HEK293 (cell line): ENCODE measurements at regions of chr7 and their contacts with region 1.

Region 1: GRCh38 chr7:138002096-138002827 is 376 bp upstream of the CREB3L2 start:
- H3K4me3 ChIP-seq: peak overlapping the region; percentile 98
- H3K27ac ChIP-seq: no peak overlapping the region
- H3K4me1 ChIP-seq: no peaks in the 10 kb centered on the region
- CTCF ChIP-seq: peak; percentile 88

Region 2: DNA sequence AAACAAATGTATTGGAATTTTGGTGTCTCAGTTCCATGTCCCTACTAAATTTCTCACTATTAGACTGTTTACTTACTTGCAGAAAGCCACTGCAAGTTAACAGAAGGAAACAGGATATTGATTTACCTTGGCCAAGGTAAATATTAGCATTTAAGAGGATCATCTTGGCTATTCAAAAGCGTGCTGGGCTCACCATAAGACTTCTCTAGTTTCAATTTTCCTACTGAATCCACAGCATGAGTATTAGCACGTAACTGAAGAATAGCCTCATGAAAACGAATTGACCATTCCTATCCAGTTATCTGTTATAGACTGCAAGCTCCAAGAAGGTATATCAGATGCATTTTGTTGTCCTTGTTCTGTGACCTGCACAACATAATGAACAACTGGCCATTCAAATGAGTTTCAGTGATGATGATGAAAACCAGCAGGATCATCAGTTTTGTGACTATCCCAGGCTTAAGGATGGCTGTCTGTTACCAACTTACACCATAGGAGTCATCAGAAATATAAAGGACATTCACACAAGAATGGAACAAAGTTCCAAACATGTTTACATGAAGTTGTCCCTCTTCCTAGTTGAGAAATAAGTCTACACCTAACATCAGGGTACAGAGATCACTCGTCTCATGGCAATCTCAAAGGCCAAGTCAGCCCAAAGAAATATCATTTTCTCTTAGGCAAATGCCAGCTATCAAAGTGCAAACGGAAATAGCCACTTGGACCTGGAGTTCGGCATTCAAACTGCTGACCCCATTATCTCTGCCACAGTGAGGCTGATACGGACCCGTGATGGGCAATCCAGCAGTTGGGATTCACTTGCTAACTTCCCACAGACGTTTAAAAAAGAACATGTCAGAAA is 53.6 kb before region 1 on chr7:
- CTCF ChIA-PET with region 1: interaction called, 11 read pairs
- POLR2A ChIA-PET with region 1: interaction called, 6 read pairs
- H3K4me3 ChIP-seq: no peak overlapping the region
- H3K27ac ChIP-seq: no peak overlapping the region
- H3K4me1 ChIP-seq: 0 out of 2 replicates have a peak, but pooled peaks cover 2% of the 10 kb centered on the region
- CTCF ChIP-seq: no peak

Region 3: GRCh38 chr7:137953665-137954470 is 48.4 kb before region 1 on chr7:
- CTCF ChIA-PET with region 1: interaction called, 11 read pairs
- POLR2A ChIA-PET with region 1: interaction called, 6 read pairs
- H3K4me3 ChIP-seq: no peak overlapping the region
- H3K27ac ChIP-seq: no peak overlapping the region
- H3K4me1 ChIP-seq: 0 out of 2 replicates have a peak, but pooled peaks cover 4% of the 10 kb centered on the region
- CTCF ChIP-seq: no peak

Region 4: GRCh38 chr7:138015096-138015495 is 12.8 kb after region 1 on chr7:
- CTCF ChIA-PET with region 1: interaction called, 10 read pairs
- POLR2A ChIA-PET with region 1: no interaction called
- H3K4me3 ChIP-seq: no peak overlapping the region
- H3K27ac ChIP-seq: no peak overlapping the region
- H3K4me1 ChIP-seq: no peaks in the 10 kb centered on the region
- CTCF ChIP-seq: no peak